H1 (cell line): ENCODE measurements at regions of chr15 and their contacts with region 1.

Region 1: GRCh38 chr15:99059010-99059981 is 45.6 kb upstream of the SYNM start:
- DNase-seq: peak; percentile 70 to 86
- H3K4me3 ChIP-seq: peak overlapping the region; percentile 41 to 70 (median 50)
- H3K27ac ChIP-seq: peak overlapping the region; percentile 43; the same call in 1 of the 2 replicates
- H3K4me1 ChIP-seq: peaks cover 0 to 5% (median 0%) of the 10 kb centered on the region in 4 experiments; a peak in 3 of 7 replicates
- H3K27me3 ChIP-seq: 0 out of 7 replicates have a peak, but pooled peaks cover 0 to 9% (median under 1%) of the 10 kb centered on the region in 4 experiments
- CTCF ChIP-seq: peak; percentile 76 to 86 (median 83)
- EP300 ChIP-seq: peak in 1 of 2 experiments; percentile 24; a peak in 1 of 3 replicates
- POLR2A ChIP-seq: peak in 1 of 2 experiments; percentile 71; a peak in 2 of 3 replicates
- RAD21 ChIP-seq: peak; percentile 38 to 77; a peak in 3 of 4 replicates

Region 2: DNA sequence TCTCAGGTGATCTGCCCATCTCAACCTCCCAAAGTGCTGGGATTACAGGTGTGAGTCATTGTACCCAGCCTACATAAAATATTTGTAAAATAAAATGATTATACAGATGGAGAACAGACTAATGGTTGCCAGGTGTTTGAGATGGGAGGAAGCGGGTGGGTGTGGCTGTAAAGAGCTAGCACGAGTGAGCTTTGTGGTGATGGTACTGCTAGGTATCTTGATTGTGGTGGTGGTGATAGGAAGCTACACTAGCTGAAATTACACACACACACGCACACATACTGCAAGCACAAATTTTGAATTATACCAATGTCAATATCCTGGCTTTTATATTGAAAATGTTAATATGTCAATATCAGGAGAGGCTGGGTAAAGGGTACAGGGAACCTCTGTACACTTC is 57.1 kb before region 1 on chr15:
- CTCF ChIA-PET with region 1: interaction called, 10 read pairs
- POLR2A ChIA-PET with region 1: no interaction called
- DNase-seq: no peak
- H3K4me3 ChIP-seq: no peak overlapping the region
- H3K27ac ChIP-seq: no peak overlapping the region
- H3K4me1 ChIP-seq: peaks cover 0 to 4% (median 0%) of the 10 kb centered on the region in 4 experiments; a peak in 2 of 7 replicates
- H3K27me3 ChIP-seq: no peaks in the 10 kb centered on the region; a peak in 2 of 7 replicates
- CTCF ChIP-seq: no peak
- EP300 ChIP-seq: no peak
- POLR2A ChIP-seq: no peak
- RAD21 ChIP-seq: no peak

Region 3: DNA sequence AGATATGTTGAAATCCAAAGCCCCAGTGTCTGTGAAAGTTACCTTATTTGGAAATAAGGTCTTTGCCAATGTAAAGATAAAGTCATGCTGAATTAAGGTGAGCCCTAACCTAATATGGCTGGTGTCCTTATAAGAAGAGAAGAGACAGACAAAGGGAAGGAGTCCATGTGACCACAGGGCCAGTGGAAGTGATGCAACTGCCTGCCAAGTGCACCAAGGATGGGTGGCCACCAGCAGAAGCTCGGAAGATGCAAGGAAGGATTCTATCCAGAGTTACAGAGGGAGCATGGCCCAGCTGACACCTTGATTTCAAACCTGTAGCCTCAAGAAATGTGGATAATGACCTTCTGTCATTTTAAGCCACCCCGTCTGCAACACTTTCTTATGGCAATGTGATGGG is 16.4 kb before region 1 on chr15:
- CTCF ChIA-PET with region 1: interaction called, 10 read pairs
- POLR2A ChIA-PET with region 1: no interaction called
- DNase-seq: no peak
- H3K4me3 ChIP-seq: no peak overlapping the region
- H3K27ac ChIP-seq: no peak overlapping the region
- H3K4me1 ChIP-seq: no peaks in the 10 kb centered on the region
- H3K27me3 ChIP-seq: no peaks in the 10 kb centered on the region
- CTCF ChIP-seq: no peak
- EP300 ChIP-seq: no peak
- POLR2A ChIP-seq: no peak
- RAD21 ChIP-seq: no peak

Region 4: GRCh38 chr15:99070208-99070607 is 10.9 kb after region 1 on chr15:
- CTCF ChIA-PET with region 1: interaction called, 78 read pairs
- POLR2A ChIA-PET with region 1: interaction called, 5 read pairs
- DNase-seq: no peak
- H3K4me3 ChIP-seq: no peak overlapping the region
- H3K27ac ChIP-seq: no peak overlapping the region
- H3K4me1 ChIP-seq: peaks cover 0 to 7% (median 0%) of the 10 kb centered on the region in 4 experiments; a peak in 1 of 7 replicates
- H3K27me3 ChIP-seq: no peaks in the 10 kb centered on the region
- CTCF ChIP-seq: no peak
- EP300 ChIP-seq: no peak
- POLR2A ChIP-seq: no peak
- RAD21 ChIP-seq: no peak